WTC11 (cell line): ENCODE measurements at regions of chr6 and their contacts with region 1.

Region 1: DNA sequence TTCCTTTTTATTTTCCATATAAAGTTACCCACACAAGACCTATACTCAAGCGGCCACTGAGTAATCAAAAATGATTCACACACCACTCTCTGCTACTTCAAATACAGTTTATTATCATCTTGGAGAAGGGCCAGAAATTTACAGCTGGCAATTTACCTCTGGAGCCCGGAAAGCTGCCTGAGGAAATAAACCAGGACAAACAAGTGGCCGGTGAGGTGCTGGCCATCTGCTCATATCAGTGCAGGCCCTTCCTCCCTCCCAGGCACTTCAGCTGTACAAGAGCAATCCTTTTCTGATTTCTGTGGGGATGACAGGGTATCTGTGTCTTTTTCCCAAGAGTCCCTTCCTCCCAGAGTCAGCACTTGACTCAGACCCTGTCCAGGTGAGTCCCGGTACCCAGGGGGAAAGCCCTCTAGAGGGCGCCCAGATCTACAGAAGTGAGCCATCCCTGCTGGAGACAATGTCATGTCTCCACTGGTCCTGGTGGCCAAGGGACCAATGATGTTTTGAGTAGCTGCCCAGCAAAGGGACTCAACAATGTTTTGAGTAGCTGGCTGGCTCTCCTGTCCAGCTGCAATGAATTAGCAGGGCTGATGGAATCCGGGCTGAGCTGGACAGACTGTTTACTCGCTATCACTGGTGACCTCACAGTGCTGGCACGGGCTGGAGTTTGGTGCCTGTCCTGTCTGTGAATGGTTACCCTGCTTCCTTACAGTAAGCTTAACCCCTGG is 23.6 kb downstream of the LRP11 start:
- DNase-seq: peak; percentile 79
- ATAC-seq: peak; percentile 99
- H3K4me3 Mint-ChIP-seq: no peak overlapping the region
- H3K27ac Mint-ChIP-seq: no peak overlapping the region
- H3K4me1 Mint-ChIP-seq: no peaks in the 10 kb centered on the region
- H3K27me3 Mint-ChIP-seq: no peaks in the 10 kb centered on the region
- CTCF ChIP-seq: no peak

Region 2: GRCh38 chr6:149863697-149864577 is 23.4 kb after region 1 on chr6 and contains the start of gene LRP11:
- CTCF ChIA-PET with region 1: interaction called, 12 read pairs
- POLR2A ChIA-PET with region 1: interaction called, 3 read pairs
- DNase-seq: peak; percentile 92
- ATAC-seq: peak; percentile 83
- H3K4me3 Mint-ChIP-seq: peak within 1 kb of the TSS; percentile 74
- H3K27ac Mint-ChIP-seq: no peak within 1 kb of the TSS; the same call in 1 of the 2 replicates
- H3K4me1 Mint-ChIP-seq: peaks cover 51% of the 10 kb centered on the region
- H3K27me3 Mint-ChIP-seq: peaks cover 15% of the 10 kb centered on the region
- CTCF ChIP-seq: no peak
- total RNA-seq, gene LRP11: 19.8 to 22.5 TPM (median 22.2 TPM) in 3 replicates

Region 3: DNA sequence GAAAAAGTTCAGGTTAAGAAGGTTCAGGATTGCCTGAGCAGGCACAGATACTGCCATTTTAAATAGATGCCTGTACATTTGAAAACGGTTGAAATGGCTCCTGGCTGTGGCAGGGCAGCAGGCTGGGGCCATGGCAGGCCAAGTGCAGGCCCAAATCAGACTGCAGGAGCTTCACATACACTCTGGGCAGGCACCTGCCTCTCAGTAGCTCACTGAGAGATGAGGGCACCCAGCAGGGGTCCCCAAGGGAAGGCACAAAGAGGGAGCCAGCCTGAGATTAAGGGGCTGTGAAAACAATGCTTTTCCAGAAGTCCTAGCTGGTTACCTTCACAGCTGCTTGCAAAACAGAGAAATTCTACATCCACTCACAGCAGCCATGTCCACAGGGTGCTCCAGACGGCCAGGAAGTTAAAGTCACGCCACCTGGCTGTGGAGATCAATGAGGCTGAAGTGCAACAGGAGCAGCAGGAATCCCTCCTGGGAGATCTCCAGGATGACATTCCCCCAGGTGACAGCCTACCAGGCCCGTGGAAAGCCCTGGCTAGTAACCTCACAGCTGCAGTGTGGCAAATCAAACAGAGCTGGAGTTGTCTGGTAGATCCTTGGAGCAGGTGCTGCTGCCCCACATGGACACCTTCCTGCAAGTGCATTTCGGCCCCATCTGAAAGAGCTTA is 63.6 kb after region 1 on chr6:
- CTCF ChIA-PET with region 1: interaction called, 21 read pairs
- POLR2A ChIA-PET with region 1: no interaction called
- DNase-seq: no peak
- ATAC-seq: peak; percentile 34
- H3K4me3 Mint-ChIP-seq: no peak overlapping the region
- H3K27ac Mint-ChIP-seq: no peak overlapping the region
- H3K4me1 Mint-ChIP-seq: no peaks in the 10 kb centered on the region
- H3K27me3 Mint-ChIP-seq: peaks cover 13% of the 10 kb centered on the region
- CTCF ChIP-seq: no peak

Region 4: DNA sequence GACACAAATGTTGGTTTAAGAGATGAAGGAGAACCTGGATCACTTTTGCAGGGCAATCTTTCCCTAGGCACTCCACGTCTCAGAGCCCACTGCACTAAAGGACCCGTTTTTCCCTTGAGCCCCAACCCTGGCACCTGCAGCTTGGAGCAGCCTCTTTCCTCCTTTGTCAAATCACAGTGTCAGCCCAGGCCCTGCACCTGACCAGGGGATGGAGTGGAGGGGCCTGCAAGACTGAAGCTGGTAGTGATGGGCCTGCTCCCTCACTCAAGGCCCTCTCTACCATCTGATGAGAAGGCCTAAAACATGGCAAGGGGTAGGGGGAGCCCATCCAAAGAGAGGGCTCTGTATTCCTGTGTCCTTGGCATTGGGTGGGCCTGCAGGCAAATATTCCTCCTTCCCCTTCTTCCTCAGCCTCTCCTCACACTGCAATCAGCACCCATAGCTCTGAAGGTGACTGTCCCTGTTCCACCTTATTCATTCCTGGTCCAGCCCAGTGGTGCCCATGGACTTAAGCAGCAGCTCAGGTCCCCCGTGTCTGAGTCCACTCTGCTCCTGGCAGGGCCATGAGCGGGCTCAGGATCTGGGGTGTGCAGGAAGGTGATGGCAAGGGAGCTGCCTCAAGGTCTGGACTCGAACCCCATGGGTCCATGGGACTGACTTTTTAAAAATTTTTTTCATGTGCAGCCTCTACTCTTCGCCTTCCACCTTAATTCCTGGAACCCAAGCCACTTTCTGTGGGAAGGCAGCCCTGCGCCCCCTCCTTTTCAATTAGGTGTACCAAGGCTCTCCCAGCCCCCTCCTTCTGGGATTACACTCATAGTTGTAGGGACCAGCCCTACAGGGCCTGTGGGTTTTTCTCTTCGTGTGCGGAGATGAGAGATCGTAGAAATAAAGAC is 75.7 kb after region 1 on chr6:
- CTCF ChIA-PET with region 1: interaction called, 14 read pairs
- POLR2A ChIA-PET with region 1: no interaction called
- DNase-seq: no peak
- ATAC-seq: no peak
- H3K4me3 Mint-ChIP-seq: no peak overlapping the region
- H3K27ac Mint-ChIP-seq: no peak overlapping the region
- H3K4me1 Mint-ChIP-seq: no peaks in the 10 kb centered on the region
- H3K27me3 Mint-ChIP-seq: peaks cover 59% of the 10 kb centered on the region
- CTCF ChIP-seq: no peak

Region 5: GRCh38 chr6:149925974-149926777 is 85.7 kb after region 1 on chr6:
- CTCF ChIA-PET with region 1: interaction called, 19 read pairs
- POLR2A ChIA-PET with region 1: interaction called, 3 read pairs
- DNase-seq: peak; percentile 93
- ATAC-seq: peak; percentile 80
- H3K4me3 Mint-ChIP-seq: peak overlapping the region; percentile 70
- H3K27ac Mint-ChIP-seq: no peak overlapping the region
- H3K4me1 Mint-ChIP-seq: peaks cover 14% of the 10 kb centered on the region
- H3K27me3 Mint-ChIP-seq: peaks cover 97% of the 10 kb centered on the region
- CTCF ChIP-seq: peak; percentile 86